ENCODE measurements at regions of chr2 and their contacts with region 1.

Region 1: DNA sequence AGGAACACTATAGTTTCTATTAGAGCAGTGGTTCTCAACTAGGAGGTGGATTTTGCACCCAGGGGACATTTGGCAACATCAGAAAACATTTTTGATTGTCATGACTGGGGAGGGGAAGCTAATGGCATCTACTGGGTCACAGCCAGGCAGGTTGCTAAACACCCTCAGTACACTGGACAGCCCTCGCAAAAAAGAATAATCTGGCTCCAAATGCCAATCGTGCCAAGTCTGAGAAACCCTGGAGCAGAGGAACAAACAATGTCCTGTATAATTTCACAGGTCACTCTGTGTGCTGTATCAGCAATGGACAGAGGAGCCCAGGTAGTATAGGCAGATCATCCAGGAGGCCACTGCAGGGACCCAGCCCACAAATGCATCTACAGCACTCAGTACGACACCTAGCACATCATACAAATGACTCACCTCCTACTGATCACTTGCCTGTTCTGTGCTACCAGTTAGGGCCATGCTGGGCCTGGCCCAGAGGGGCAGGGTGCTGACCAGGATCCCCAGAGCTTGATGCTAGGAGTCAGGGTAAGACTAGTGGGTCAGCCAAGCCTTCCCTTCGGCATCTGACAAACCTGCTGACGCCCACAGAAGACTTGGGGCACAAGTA is 37.6 kb downstream of the SFXN5 start:
- DNase-seq: peak; percentile 61
- ATAC-seq: peak; percentile 17
- H3K4me3 ChIP-seq: no peak overlapping the region
- H3K27ac ChIP-seq: peak overlapping the region; percentile 97
- H3K4me1 ChIP-seq: peaks cover 72% of the 10 kb centered on the region
- H3K27me3 ChIP-seq: no peaks in the 10 kb centered on the region
- CTCF ChIP-seq: no peak
- EP300 ChIP-seq: no peak
- POLR2A ChIP-seq: no peak
- RAD21 ChIP-seq: no peak

Region 2: DNA sequence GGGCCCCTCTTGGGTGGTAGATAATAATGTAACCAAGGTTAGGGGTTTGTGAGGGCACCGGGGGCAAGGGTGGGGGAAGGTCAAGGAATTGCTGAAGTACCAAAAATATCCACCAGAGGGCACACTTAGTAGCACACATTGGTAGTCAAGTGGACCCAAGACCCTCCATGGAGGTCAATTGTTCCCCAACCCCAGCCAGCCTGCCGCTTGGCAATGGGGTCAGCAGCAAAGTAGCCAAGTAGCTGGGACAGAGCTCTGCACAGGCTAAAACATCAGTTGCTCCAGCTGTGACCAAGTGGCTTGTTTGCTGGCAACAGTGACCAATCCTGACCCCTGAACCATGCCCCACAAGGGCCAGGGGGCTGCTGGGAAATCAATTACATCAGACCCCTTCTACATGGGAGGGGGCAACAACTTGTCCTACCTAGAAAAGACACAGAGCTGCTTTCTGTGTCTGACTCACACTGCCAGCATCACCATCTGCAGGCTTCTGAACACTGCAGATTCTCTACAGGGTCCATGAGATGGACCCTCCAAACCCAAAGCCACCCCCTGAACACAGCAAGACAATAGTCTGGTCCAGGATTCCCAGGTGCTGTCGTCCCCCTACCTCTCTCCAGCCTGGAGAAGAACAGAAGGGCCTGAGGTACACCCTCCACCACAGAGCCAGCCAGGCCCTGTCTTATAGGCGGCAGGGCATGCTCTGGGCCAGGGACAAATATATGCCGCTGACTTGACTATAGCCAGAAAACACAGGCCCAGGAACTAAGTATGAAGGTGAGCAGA is 40.5 kb before region 1 on chr2:
- CTCF ChIA-PET with region 1: no interaction called
- POLR2A ChIA-PET with region 1: interaction called, 19 read pairs
- in situ Hi-C with region 1: no loop called
- intact Hi-C with region 1: loop called (anchors 2 kb)
- DNase-seq: peak; percentile 58
- ATAC-seq: peak; percentile 67
- H3K4me3 ChIP-seq: no peak overlapping the region
- H3K27ac ChIP-seq: peak overlapping the region; percentile 20
- H3K4me1 ChIP-seq: peaks cover 13% of the 10 kb centered on the region
- H3K27me3 ChIP-seq: no peaks in the 10 kb centered on the region
- CTCF ChIP-seq: peak; percentile 89
- EP300 ChIP-seq: no peak
- POLR2A ChIP-seq: no peak
- RAD21 ChIP-seq: peak; percentile 94

Region 3: DNA sequence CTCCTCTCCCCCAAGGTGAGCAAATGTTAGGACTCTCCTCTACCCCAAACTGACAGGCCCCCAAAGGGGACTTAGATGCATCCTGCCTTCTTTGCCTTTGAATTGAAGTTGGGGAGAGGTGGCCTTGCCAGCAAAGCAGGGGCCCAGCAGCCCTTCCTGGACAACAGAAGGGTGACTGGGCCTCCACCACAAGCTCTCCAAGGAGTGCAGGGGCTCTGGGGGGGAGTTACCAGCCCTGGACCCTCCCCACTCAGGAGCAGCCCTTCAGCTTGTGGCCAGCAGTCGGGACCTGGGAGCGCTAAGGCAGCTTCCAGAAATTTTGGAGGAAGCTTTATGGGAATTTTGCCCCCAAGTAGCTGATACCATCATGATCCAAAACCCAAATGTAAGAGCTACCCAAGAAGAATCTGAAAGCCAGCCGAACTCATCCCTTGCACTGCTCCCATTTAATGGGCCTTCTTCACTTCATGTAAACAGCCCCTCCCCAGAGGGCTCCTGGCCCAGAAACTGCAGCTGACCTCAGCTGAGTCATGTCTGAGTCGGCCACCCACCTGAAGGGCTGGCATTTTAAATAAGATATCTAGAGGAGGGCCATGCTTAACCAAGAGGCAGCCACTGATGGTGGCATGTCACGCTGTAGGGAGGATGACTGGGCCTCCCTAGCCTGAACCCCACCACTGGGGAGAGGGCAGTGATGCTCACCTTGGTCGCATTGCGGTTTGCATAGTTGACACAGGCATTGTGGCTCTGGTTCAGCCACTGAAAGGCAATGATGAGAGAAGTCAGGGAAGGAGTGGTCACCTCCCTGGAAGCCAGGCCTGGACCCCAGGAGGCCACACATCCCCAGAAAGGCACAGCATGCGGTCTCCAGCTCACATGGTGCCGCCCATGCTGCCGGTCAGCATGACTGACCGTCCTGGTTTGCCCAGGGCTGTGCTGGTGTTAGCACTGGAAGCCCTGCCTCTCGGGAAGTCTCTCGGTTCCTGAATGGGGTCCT is 33.8 kb before region 1 on chr2:
- CTCF ChIA-PET with region 1: interaction called, 3 read pairs
- POLR2A ChIA-PET with region 1: interaction called, 14 read pairs
- in situ Hi-C with region 1: no loop called
- intact Hi-C with region 1: no loop called
- DNase-seq: no peak
- ATAC-seq: no peak; the same call in 2 of the 3 replicates
- H3K4me3 ChIP-seq: no peak overlapping the region
- H3K27ac ChIP-seq: peak overlapping the region; percentile 73
- H3K4me1 ChIP-seq: peaks cover 27% of the 10 kb centered on the region
- H3K27me3 ChIP-seq: no peaks in the 10 kb centered on the region
- CTCF ChIP-seq: no peak
- EP300 ChIP-seq: no peak
- POLR2A ChIP-seq: no peak
- RAD21 ChIP-seq: no peak

Region 4: GRCh38 chr2:73004889-73005596 is 28.8 kb before region 1 on chr2:
- CTCF ChIA-PET with region 1: interaction called, 3 read pairs
- POLR2A ChIA-PET with region 1: interaction called, 14 read pairs
- in situ Hi-C with region 1: no loop called
- intact Hi-C with region 1: no loop called
- DNase-seq: no peak
- ATAC-seq: no peak
- H3K4me3 ChIP-seq: no peak overlapping the region
- H3K27ac ChIP-seq: no peak overlapping the region
- H3K4me1 ChIP-seq: peaks cover 25% of the 10 kb centered on the region
- H3K27me3 ChIP-seq: no peaks in the 10 kb centered on the region
- CTCF ChIP-seq: no peak
- EP300 ChIP-seq: no peak
- POLR2A ChIP-seq: no peak
- RAD21 ChIP-seq: no peak

Region 5: GRCh38 chr2:73020657-73021370 is 13.1 kb before region 1 on chr2:
- CTCF ChIA-PET with region 1: no interaction called
- POLR2A ChIA-PET with region 1: interaction called, 133 read pairs
- in situ Hi-C with region 1: no loop called
- intact Hi-C with region 1: loop called (anchors 1 kb)
- DNase-seq: peak; percentile 97
- ATAC-seq: peak; percentile 91
- H3K4me3 ChIP-seq: peak overlapping the region in 1 of 3 experiments; percentile 29; a peak in 1 of 6 replicates
- H3K27ac ChIP-seq: peak overlapping the region; percentile 71
- H3K4me1 ChIP-seq: peaks cover 35% of the 10 kb centered on the region
- H3K27me3 ChIP-seq: no peaks in the 10 kb centered on the region
- CTCF ChIP-seq: 0 out of 2 replicates have a peak, but pooled peaks have one; percentile 14
- EP300 ChIP-seq: peak in 1 of 2 experiments; percentile 79; a peak in 2 of 4 replicates
- POLR2A ChIP-seq: no peak
- RAD21 ChIP-seq: peak; percentile 51

Region 6: DNA sequence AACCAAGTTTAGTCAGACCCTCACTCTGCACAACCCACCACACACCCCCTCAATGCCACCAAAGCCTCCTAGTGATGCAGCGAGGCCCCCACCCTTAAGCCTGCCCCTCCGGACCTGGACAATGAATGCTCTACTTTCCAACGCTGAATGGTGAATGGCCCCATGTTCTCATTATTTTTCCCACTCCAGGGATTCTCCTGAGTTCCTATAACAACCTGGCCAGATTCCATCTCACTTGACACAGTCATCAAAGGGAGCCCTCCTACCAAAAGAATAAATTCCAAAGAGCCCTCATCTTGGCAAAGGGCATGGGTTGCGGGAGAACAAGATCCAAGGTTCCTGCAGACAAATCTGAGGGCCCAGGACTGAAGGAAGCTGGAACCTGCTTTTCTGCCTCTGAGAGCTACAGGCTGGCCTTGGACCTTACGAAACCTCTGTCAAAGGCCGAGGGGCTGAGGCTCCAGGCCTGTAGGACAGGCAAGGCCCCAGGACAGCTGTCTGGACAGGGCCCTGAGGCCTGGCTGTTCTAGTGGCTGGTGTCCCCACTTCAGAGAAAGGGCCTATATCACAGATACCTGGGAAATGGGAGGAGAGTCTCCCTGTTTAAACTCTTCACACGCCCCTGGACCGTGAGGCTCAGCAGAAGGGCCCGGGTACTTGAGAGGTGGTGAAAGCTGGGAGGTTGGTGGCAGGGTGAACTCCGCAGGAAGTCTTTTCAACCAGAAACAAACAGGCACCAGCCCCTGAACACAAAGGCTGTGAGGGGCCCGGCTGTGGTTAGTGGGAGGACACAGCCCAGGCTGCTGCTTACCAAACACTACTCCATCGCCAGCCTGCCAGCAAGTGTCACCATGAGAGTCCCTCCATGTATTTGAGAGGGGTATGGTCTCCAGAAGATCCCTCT is 10.3 kb after region 1 on chr2:
- CTCF ChIA-PET with region 1: no interaction called
- POLR2A ChIA-PET with region 1: interaction called, 25 read pairs
- in situ Hi-C with region 1: no loop called
- intact Hi-C with region 1: no loop called
- DNase-seq: peak; percentile 61
- ATAC-seq: peak; percentile 96
- H3K4me3 ChIP-seq: 0 out of 6 replicates have a peak overlapping the region, but pooled peaks of 1 of the 3 experiments have one; percentile 17
- H3K27ac ChIP-seq: peak overlapping the region; percentile 75
- H3K4me1 ChIP-seq: peaks cover 45% of the 10 kb centered on the region
- H3K27me3 ChIP-seq: no peaks in the 10 kb centered on the region
- CTCF ChIP-seq: no peak
- EP300 ChIP-seq: no peak
- POLR2A ChIP-seq: no peak
- RAD21 ChIP-seq: peak; percentile 33; the same call in 1 of the 2 replicates

Region 7: DNA sequence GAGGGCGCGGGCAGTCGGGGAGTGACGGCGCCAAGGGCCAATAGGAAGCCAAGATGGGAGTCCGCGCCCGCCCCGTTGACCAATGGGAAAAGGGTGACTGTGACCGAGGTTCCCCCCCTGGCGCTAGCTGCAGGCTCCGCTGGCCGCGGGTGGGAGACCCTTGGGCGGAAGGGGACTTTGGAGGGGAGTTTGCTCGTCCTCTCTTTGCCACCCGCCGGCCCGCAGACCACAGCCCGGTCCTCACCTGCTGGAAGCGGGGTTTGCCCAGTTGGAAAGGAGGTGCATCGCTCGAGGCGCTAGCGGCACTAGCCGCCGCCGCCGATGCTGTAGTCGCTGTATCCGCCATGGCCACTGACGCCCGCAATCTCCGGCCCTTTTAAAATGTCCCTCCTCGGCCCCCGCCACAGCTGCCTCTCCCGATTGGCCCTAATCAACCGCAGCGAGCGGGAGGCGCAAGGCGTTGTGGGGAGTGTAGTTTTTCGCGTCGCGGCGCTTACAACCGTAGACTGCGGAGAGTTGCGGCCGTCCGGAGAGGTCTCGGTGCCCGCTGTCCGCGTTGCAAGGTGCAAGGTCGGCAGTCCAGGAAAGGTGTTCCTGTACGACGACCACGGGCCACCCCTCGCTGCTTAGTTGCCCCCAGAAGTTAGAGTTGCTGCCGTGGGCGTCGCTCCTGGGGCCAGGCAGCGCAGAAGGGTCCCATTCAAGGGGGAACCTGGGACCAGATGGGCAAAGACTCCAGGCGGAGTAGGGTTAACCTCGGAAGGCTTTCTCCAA is 37.7 kb after region 1 on chr2 and contains the start of gene SFXN5:
- CTCF ChIA-PET with region 1: no interaction called
- POLR2A ChIA-PET with region 1: interaction called, 35 read pairs
- in situ Hi-C with region 1: no loop called
- intact Hi-C with region 1: no loop called
- DNase-seq: peak; percentile 95
- ATAC-seq: peak; percentile 89
- H3K4me3 ChIP-seq: peak within 1 kb of the TSS; percentile 81 to 98 (median 95)
- H3K27ac ChIP-seq: peak within 1 kb of the TSS; percentile 89
- H3K4me1 ChIP-seq: peaks cover 53% of the 10 kb centered on the region
- H3K27me3 ChIP-seq: no peaks in the 10 kb centered on the region; a peak in 1 of 5 replicates
- CTCF ChIP-seq: peak; percentile 33; the same call in 1 of the 2 replicates
- EP300 ChIP-seq: 0 out of 4 replicates have a peak, but pooled peaks of 1 of the 2 experiments have one; percentile 6
- POLR2A ChIP-seq: peak; percentile 82 to 90
- RAD21 ChIP-seq: peak; percentile 34; the same call in 1 of the 2 replicates
- total RNA-seq, gene SFXN5: 22.2 and 34.9 TPM in 2 replicates